Mammary epithelial cell (primary cell): ENCODE measurements at regions of chr11 and their contacts with region 1.

Region 1: GRCh38 chr11:65540297-65541092 is 15.6 kb downstream of the SCYL1 start:
- DNase-seq: peak; percentile 90
- H3K4me3 ChIP-seq: peak overlapping the region; percentile 53 to 55 (median 55)
- H3K27ac ChIP-seq: peak overlapping the region; percentile 44
- H3K4me1 ChIP-seq: peaks cover 27% of the 10 kb centered on the region
- H3K27me3 ChIP-seq: no peaks in the 10 kb centered on the region
- CTCF ChIP-seq: peak; percentile 43 to 95

Region 2: GRCh38 chr11:65354265-65355012 is 186.1 kb before region 1 on chr11 and contains the start of gene TIGD3:
- CTCF ChIA-PET with region 1: no interaction called
- dilution Hi-C with region 1: loop called (anchors 5 kb)
- in situ Hi-C with region 1: no loop called
- intact Hi-C with region 1: no loop called
- DNase-seq: peak; percentile 90
- H3K4me3 ChIP-seq: peak within 1 kb of the TSS; percentile 41 to 72 (median 55)
- H3K27ac ChIP-seq: no peak within 1 kb of the TSS
- H3K4me1 ChIP-seq: peaks cover 15% of the 10 kb centered on the region
- H3K27me3 ChIP-seq: peaks cover 12% of the 10 kb centered on the region
- CTCF ChIP-seq: no peak
- total RNA-seq, gene TIGD3: not detected

Region 3: GRCh38 chr11:65555693-65556231 is 15.3 kb after region 1 on chr11:
- CTCF ChIA-PET with region 1: no interaction called
- dilution Hi-C with region 1: no loop called
- in situ Hi-C with region 1: no loop called
- intact Hi-C with region 1: loop called (anchors 1 kb)
- DNase-seq: peak; percentile 92
- H3K4me3 ChIP-seq: no peak overlapping the region
- H3K27ac ChIP-seq: no peak overlapping the region
- H3K4me1 ChIP-seq: peaks cover 56% of the 10 kb centered on the region
- H3K27me3 ChIP-seq: no peaks in the 10 kb centered on the region
- CTCF ChIP-seq: no peak

Region 4: DNA sequence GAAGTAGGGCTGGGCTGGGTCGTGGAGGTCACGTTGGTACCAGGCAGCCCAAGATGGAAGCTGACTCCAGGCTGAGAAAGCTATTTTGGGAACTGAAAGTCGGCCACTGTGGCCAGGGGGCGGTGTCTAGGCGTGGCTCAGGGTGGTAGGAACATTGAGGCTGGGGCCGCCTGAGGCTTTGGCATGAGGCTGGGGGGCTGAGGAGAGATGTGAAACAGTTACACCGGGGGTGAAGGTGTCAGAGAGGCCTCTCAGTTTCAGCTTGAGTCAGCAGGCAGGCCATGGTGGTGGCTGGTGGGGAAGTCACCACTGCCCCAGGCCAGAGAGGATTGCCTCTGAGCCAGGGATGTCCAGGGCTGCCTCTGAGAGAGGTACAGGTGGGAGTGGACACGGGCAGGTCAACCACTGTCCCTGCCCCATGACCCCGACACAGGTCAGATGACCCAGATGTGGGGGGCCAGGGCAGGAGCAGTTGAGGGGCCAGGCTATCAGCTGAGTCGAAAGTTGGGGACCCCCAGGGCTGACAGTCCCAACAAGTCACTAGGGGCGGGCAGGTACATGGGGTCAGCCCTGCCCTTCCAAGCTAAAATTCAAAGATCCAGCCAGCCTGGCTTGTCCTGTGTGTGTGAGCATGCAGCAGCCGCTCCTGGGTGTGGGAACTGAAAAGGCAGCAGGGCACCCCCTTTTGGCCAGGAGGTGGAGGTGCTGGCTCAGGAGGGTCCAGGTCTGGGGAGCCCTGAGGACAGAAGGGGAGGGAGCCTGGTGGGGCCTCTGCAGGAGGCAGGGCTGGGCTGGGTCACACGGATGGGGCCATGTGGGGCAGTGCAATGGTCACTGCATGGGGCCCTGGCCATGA is 47.9 kb after region 1 on chr11:
- CTCF ChIA-PET with region 1: interaction called, 11 read pairs
- dilution Hi-C with region 1: loop called (anchors 5 kb)
- in situ Hi-C with region 1: no loop called
- intact Hi-C with region 1: loop called (anchors 1 kb)
- DNase-seq: no peak
- H3K4me3 ChIP-seq: no peak overlapping the region
- H3K27ac ChIP-seq: no peak overlapping the region
- H3K4me1 ChIP-seq: peaks cover 26% of the 10 kb centered on the region
- H3K27me3 ChIP-seq: no peaks in the 10 kb centered on the region
- CTCF ChIP-seq: peak; percentile 67 to 69

Region 5: GRCh38 chr11:65593518-65594298 is 53.2 kb after region 1 on chr11:
- CTCF ChIA-PET with region 1: interaction called, 11 read pairs
- dilution Hi-C with region 1: loop called (anchors 5 kb)
- in situ Hi-C with region 1: no loop called
- intact Hi-C with region 1: loop called (anchors 1 kb)
- DNase-seq: no peak
- H3K4me3 ChIP-seq: no peak overlapping the region
- H3K27ac ChIP-seq: no peak overlapping the region
- H3K4me1 ChIP-seq: peaks cover 32% of the 10 kb centered on the region
- H3K27me3 ChIP-seq: no peaks in the 10 kb centered on the region
- CTCF ChIP-seq: peak; percentile 64 to 77

Region 6: DNA sequence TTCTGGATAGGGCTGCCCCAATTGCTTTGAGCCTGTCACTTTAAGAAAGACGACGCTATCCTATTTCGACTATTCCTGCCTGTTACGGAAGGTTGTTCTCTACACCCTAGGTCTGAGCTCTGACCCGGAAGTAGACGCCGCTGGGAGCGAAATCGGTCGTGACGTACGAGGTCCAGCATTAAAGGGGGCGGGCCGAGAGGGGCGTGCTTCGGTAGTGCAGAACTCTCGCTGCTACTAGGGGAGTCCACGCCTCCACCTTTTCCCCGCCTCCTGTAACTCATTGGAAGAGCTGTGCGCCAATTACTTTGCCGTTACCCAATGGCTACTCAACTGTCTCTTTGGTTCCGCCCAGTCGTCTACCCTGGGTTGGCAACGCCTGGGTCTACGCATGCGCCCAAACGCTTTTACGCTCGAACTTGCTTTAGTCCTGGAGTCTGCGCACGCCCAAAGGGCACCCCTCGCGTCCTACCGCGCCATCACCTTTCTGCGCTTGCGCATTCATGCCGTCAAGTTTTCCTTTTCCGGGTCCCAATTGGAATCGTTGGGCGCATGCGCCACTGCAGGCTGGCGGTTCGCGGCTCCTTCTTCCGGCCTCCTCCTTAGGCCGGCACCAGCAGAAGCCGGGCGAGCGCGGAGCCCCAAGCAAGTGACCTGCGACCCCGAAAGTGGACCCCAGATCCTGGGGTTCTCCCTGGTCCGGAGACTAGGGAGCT is 74.9 kb after region 1 on chr11 and contains the start of gene PCNX3:
- CTCF ChIA-PET with region 1: no interaction called
- dilution Hi-C with region 1: no loop called
- in situ Hi-C with region 1: no loop called
- intact Hi-C with region 1: loop called (anchors 1 kb)
- DNase-seq: peak; percentile 100
- H3K4me3 ChIP-seq: peak within 1 kb of the TSS; percentile 75 to 84 (median 81)
- H3K27ac ChIP-seq: peak within 1 kb of the TSS; percentile 91
- H3K4me1 ChIP-seq: peaks cover 30% of the 10 kb centered on the region
- H3K27me3 ChIP-seq: no peaks in the 10 kb centered on the region
- CTCF ChIP-seq: no peak
- total RNA-seq, gene PCNX3: 29.7 to 46.8 TPM

Region 7: GRCh38 chr11:65637794-65638317 is 97.4 kb after region 1 on chr11 and contains the start of gene SIPA1:
- CTCF ChIA-PET with region 1: no interaction called
- dilution Hi-C with region 1: loop called (anchors 5 kb)
- in situ Hi-C with region 1: no loop called
- intact Hi-C with region 1: no loop called
- DNase-seq: peak; percentile 73
- H3K4me3 ChIP-seq: peak within 1 kb of the TSS; percentile 65 to 73 (median 72)
- H3K27ac ChIP-seq: peak within 1 kb of the TSS; percentile 20
- H3K4me1 ChIP-seq: peaks cover 11% of the 10 kb centered on the region
- H3K27me3 ChIP-seq: no peaks in the 10 kb centered on the region
- CTCF ChIP-seq: peak in 1 of 2 donors; percentile 36
- total RNA-seq, gene SIPA1: 13.2 to 16.1 TPM

Region 8: GRCh38 chr11:65662799-65663638 is 122.5 kb after region 1 on chr11 and contains the start of gene RELA:
- CTCF ChIA-PET with region 1: no interaction called
- dilution Hi-C with region 1: no loop called
- in situ Hi-C with region 1: no loop called
- intact Hi-C with region 1: no loop called
- DNase-seq: peak; percentile 95
- H3K4me3 ChIP-seq: peak within 1 kb of the TSS; percentile 83 to 94 (median 86)
- H3K27ac ChIP-seq: peak within 1 kb of the TSS; percentile 82
- H3K4me1 ChIP-seq: peaks cover 17% of the 10 kb centered on the region
- H3K27me3 ChIP-seq: no peaks in the 10 kb centered on the region
- CTCF ChIP-seq: no peak
- total RNA-seq, gene RELA: 23.7 to 79.0 TPM

Region 9: DNA sequence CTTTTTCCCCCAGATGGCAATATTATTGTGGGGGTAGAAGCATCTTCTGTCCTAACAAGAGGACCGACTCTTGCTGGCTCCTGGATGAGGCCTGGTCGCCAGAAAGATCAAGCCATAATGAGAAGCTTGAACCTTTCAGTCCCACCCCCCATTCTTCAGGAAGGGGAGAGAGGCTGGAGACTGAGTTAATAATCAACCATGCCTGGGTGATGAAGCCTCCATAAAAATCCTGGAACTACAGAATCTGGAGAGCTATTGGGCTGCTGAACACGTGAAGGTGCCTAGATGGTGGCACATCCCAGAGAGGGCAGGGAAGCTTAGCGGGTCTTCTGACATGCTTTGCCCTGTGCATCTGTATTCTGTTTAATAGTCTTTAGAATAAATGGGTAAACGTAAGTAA is 223.9 kb after region 1 on chr11:
- CTCF ChIA-PET with region 1: no interaction called
- dilution Hi-C with region 1: no loop called
- in situ Hi-C with region 1: no loop called
- intact Hi-C with region 1: no loop called
- DNase-seq: no peak
- H3K4me3 ChIP-seq: no peak overlapping the region
- H3K27ac ChIP-seq: no peak overlapping the region
- H3K4me1 ChIP-seq: no peaks in the 10 kb centered on the region
- H3K27me3 ChIP-seq: no peaks in the 10 kb centered on the region
- CTCF ChIP-seq: no peak